Head of caudate nucleus (tissue), 42 donors: ENCODE measurements at regions of chr20 and their contacts with region 1.

Region 1: DNA sequence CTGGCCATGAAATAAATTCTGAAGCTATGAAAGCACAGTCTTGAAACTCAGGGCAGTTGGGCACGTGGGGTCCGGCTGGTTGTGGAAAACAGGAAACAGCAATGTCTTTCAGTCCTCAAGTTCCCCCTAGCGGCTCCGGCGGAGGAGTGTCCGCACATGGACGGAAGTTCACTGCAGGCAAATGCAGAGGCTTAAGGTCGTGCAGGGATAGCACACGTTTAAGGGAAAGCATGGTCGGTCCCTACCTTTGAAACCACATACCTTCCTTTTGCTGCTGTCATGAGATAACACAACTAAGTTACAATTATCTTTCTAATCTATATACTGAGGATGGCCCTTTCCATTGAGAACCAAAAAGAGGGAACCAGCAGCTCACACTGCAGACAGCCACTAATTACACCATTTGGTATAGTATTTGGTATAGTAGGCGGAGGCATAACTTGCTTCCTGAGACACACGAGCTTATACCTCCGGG is 52.6 kb upstream of the NFATC2 start:
- DNase-seq: peak; percentile 77 to 95 (median 89)

Region 2: DNA sequence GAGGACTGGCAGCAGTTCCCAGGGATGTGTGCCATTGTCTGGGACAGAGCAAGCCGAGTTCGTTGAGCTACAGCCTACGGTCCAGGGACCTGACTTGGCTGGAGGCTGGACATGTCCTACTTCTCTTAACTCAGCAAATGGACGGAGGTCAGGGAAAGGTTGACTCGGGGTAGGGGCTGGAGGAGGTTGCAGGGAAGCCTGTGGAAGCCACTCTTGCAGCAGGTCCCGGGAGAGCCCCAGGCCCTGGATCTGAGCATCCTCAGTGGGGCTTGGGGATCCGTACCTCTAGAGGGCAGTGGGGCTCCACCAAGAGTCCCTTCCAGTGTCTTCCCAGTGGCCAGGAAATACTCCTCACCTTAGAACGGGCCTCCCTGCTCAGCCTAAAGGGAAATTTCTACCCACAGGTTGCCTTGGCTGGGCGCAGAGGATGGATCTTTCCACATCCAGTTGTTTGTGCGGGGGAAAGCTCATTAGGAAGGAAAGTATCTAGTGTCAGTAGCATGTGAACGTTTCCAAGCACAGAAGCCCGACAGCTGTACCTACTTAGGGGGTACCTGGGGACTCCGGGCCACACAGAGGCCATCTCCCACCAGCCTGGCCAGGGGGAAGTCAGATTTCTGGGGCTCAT is 222.8 kb before region 1 on chr20:
- intact Hi-C with region 1: loop called (anchors 10 kb)
- DNase-seq: peak; percentile 39 to 90 (median 69)